Gastrocnemius medialis (tissue), 4 donors: ENCODE measurements at regions of chr4 and their contacts with region 1.

Region 1: DNA sequence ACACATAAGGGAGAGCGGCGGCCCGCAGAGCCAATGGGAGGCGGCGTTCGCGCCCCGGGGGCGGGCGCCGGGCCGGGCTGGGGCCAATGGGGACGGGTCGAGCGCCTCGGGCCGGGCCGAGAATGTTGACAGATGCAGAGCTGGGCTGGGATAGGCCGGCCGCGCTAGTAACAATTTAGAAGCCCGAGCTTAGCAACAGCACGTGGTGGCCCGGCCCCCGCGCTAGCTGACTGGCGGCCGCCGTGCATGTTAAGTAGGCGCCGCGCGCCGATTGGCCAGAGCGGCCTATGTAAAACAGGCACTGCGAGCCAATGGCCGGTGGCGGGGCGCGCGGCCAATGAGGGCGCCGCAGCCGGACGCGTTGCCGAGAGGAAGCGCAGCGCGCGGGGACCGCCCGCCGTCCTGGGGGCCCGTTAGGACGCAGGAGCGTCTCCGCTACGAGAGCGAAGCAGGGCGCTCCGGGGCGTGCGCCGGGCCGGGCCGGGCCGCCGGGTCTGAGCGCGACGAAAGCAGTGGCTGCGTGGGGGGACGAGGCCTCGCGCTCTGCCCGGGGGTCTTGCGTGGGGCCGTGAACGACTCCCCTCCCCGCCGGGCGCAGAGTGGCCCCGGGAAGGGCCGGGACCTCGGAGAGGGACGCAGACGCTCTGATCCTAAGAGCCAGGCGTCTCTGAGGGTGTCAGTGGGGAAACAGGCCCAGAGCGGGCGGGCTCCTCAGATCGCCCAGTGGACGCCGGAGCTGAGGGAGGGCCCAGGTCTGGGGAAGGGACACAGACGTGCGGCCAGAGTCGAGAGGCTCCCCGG is 434 bp upstream of the MXD4 start:
- DNase-seq: peak; percentile 99 to 100
- ATAC-seq: peak; percentile 81 to 82
- H3K4me3 ChIP-seq: peak overlapping the region; percentile 56 to 91 (median 76)
- H3K27ac ChIP-seq: peak overlapping the region; percentile 93 to 99 (median 96)
- H3K4me1 ChIP-seq: peaks cover 55 to 77% of the 10 kb centered on the region in 2 donors
- H3K27me3 ChIP-seq: no peaks in the 10 kb centered on the region
- CTCF ChIP-seq: no peak
- POLR2A ChIP-seq: peak; percentile 91 to 98

Region 2: DNA sequence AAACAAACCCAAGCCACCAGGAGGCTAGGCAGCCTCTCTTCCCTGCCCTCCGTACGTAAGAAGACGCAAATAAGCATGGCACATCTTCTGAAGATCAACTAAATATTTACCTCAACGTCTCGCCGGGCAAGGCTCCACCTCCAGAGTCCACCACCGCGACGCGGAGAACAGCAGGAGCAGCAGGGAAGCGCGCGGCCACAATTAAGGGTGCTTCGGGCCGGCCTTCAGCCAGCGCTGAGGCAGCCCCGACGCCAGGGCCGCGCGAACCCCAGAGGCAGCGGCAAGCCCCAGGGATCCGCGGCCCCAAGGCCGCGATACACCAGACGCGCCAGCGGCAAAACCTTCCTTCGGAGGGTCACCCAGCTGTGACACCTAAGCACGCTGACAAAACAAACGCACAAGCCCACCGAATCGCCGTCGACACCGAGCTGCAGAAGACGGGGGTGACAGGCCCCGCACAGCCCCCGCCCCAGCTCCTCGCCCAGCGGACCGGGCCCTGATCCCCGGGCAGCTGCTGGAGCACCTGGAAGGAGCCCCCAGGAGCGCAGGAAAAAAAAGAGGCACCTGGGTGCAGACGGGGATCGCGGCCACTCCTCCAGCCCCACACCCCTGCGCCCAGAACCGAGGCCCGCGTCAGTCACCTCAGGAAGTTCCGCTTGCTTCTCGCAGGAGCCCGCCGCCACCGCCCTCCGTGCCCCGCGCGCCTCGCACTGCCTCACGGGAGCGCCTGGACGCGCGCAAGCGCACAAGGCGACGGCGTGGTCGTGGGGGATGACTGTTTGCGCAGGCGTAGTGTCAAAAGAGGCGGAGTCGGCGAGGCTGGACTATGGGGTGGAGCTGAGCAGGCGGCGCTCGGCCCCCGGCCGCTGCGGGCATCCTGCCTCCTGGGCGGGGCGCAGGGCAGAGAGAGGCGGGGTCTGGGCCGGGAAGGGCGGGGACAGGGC is 20.7 kb before region 1 on chr4 and contains the starts of genes HAUS3 and POLN:
- in situ Hi-C with region 1: no loop called
- intact Hi-C with region 1: loop called (anchors 1 kb)
- DNase-seq: peak; percentile 96 to 97
- ATAC-seq: peak; percentile 97 to 98
- H3K4me3 ChIP-seq: peak within 1 kb of the TSS; percentile 88 to 98 (median 92)
- H3K27ac ChIP-seq: peak within 1 kb of the TSS; percentile 75 to 86 (median 82)
- H3K4me1 ChIP-seq: peaks cover 34 to 39% of the 10 kb centered on the region in 2 donors
- H3K27me3 ChIP-seq: no peaks in the 10 kb centered on the region
- CTCF ChIP-seq: no peak
- POLR2A ChIP-seq: peak; percentile 74 to 86
- total RNA-seq, gene HAUS3: 4.8 to 12.1 (median 9.5) TPM
- total RNA-seq, gene POLN: 0.71 to 2.0 (median 0.86) TPM in 3 of 4 donors, not detected in the other

Region 3: GRCh38 chr4:2468445-2469192 is 206.3 kb after region 1 on chr4 and contains the start of gene RNF4:
- in situ Hi-C with region 1: no loop called
- intact Hi-C with region 1: loop called (anchors 5 kb)
- DNase-seq: peak; percentile 94 to 97
- ATAC-seq: peak; percentile 98
- H3K4me3 ChIP-seq: peak within 1 kb of the TSS; percentile 81 to 89 (median 88)
- H3K27ac ChIP-seq: peak within 1 kb of the TSS; percentile 88 to 98 (median 94)
- H3K4me1 ChIP-seq: peaks cover 26 to 27% of the 10 kb centered on the region in 2 donors
- H3K27me3 ChIP-seq: no peaks in the 10 kb centered on the region
- CTCF ChIP-seq: no peak
- POLR2A ChIP-seq: peak; percentile 75 to 81
- total RNA-seq, gene RNF4: 21.7 to 48.7 (median 34.7) TPM

Region 4: GRCh38 chr4:2923141-2923551 is 660.8 kb after region 1 on chr4:
- in situ Hi-C with region 1: no loop called
- intact Hi-C with region 1: no loop called
- DNase-seq: peak in 1 of 2 donors; percentile 7
- ATAC-seq: no peak
- H3K4me3 ChIP-seq: no peak overlapping the region
- H3K27ac ChIP-seq: peak overlapping the region in 1 of 4 donors; percentile 22
- H3K4me1 ChIP-seq: no peaks in the 10 kb centered on the region
- H3K27me3 ChIP-seq: no peaks in the 10 kb centered on the region
- CTCF ChIP-seq: no peak
- POLR2A ChIP-seq: no peak